ENCODE measurements at regions of chr9 and their contacts with region 1.

Region 1: DNA sequence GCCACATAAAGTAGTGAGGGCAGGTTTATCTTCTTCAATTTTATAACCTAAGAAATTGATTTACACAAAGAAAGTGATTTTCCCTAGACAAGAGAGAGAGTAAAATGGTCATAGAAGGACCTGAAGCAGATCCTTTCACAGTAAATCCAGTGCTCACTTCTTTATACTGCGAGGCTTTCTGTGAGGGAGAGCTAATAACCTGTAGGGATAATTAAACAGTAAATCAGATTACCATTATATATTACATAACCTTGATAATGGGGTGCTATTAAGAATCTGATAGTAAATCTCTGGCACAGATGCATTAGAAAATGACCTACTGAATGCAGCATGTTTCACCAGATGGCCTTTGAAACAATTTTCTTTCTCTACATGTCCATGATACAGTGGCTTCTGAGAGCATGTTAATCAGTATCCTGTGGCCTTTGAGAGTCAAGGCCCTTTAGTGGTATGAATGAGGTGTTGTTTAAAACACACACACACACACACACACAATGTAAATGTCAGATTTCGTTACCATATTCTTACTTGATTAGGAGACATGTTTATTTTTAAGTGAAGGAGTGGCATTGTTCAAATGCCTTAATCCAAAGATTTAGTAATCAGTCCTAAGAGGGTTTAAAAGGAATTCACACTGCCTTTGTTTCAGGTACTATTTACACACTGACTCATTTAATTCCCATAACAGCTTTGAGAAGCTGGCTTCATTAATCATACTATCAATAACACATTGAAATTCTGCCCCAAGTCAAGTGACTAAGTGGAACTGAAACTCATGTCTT is 124.7 kb downstream of the ALDH1A1 start:
- H3K4me3 ChIP-seq: no peak overlapping the region
- H3K27ac ChIP-seq: no peak overlapping the region
- H3K4me1 ChIP-seq: peaks cover 2% of the 10 kb centered on the region
- CTCF ChIP-seq: no peak

Region 2: GRCh38 chr9:72038890-72039410 is 789.2 kb before region 1 on chr9:
- CTCF ChIA-PET with region 1: interaction called, 28 read pairs
- POLR2A ChIA-PET with region 1: no interaction called
- H3K4me3 ChIP-seq: no peak overlapping the region
- H3K27ac ChIP-seq: no peak overlapping the region
- H3K4me1 ChIP-seq: 0 out of 2 replicates have a peak, but pooled peaks cover 3% of the 10 kb centered on the region
- CTCF ChIP-seq: peak; percentile 84

Region 3: DNA sequence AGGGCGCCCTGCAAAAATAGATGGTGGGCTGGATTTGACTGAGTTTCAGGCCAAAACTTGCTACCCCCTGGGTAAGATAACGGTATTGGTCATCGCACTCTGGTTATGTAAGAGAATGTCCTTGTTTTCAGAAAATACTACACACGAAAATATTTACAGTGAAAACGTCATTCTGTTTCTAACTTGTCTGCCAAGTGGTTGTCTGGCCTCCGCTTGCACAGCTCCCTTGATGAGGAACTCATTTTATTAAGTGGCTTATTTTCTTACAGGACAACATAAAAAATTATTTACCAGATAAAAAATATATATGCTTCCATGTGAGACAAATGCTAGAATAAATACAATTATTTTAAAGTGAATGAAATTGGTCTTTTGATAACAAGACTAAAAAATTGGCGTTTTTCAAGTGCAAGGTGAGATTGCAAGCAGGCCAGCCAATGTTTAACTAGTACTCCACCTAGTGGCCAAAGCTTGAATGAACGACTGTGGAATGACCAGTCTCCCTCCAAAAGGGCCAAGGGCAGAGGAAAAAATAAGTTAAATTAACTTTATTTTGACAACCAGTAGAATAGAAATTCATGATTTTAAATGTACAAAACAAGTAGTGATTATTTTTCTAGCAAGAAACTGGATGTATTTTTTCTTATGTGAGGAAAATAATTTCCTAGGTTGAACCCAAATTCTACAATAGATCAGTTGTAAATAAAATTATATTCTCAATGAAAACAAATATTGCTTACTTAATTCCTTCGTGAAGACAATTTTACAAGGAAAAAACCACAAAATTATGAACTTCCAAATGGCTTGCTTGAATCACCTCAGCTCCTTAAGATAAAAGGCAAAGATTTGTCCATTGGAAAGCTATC is 556.3 kb before region 1 on chr9:
- CTCF ChIA-PET with region 1: interaction called, 20 read pairs
- POLR2A ChIA-PET with region 1: no interaction called
- H3K4me3 ChIP-seq: no peak overlapping the region
- H3K27ac ChIP-seq: no peak overlapping the region
- H3K4me1 ChIP-seq: no peaks in the 10 kb centered on the region
- CTCF ChIP-seq: no peak; the same call in 1 of the 2 replicates

Region 4: DNA sequence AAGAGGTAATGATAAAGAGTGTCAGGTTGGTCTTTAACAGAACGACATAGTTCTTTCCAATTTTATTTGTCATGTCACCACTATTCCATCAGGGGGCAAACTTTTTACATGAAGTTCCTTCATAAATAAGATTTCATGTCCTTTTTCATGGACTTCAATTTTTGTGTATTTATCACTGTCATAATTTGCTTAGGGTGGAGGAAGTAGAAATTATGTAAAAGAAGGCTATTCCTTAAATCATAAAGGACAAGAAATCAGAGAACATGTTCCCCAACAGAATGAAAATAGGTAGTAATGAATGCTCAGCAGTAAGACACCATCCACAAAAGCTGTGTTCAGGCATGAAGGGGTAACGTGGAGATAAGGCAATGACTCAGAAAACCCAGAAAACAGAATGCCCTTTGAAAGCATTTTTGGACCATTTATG is 535.9 kb before region 1 on chr9:
- CTCF ChIA-PET with region 1: interaction called, 23 read pairs
- POLR2A ChIA-PET with region 1: no interaction called
- H3K4me3 ChIP-seq: no peak overlapping the region
- H3K27ac ChIP-seq: no peak overlapping the region
- H3K4me1 ChIP-seq: peaks cover 2% of the 10 kb centered on the region; the same call in 1 of the 2 replicates
- CTCF ChIP-seq: no peak

Region 5: DNA sequence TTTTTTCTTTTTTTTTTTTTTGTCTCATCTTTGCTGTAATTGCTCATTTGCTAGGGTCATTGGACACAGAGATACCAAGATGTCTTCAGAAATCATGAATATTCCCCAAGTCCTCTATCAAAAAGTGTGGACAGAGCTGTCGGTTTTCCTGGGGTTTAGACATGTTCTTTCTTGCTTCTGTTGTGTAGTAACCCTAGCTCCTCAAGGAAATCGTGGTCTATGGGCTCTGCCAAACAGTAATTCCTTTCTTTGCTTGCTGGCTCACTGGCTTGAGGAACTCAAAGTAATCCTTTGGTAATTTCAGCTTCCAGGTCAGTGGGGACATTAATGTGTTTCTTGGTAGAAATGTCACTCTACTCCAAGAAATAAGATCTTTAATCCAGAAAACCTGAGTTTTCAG is 205.0 kb before region 1 on chr9:
- CTCF ChIA-PET with region 1: no interaction called
- POLR2A ChIA-PET with region 1: no interaction called
- H3K4me3 ChIP-seq: no peak overlapping the region
- H3K27ac ChIP-seq: no peak overlapping the region
- H3K4me1 ChIP-seq: no peaks in the 10 kb centered on the region
- CTCF ChIP-seq: no peak

Region 6: GRCh38 chr9:72807765-72808445 is 20.2 kb before region 1 on chr9:
- CTCF ChIA-PET with region 1: interaction called, 37 read pairs
- POLR2A ChIA-PET with region 1: no interaction called
- H3K4me3 ChIP-seq: no peak overlapping the region
- H3K27ac ChIP-seq: no peak overlapping the region
- H3K4me1 ChIP-seq: no peaks in the 10 kb centered on the region
- CTCF ChIP-seq: no peak

Region 7: GRCh38 chr9:72902268-72902667 is 74.1 kb after region 1 on chr9:
- CTCF ChIA-PET with region 1: no interaction called
- POLR2A ChIA-PET with region 1: no interaction called
- H3K4me3 ChIP-seq: no peak overlapping the region
- H3K27ac ChIP-seq: no peak overlapping the region
- H3K4me1 ChIP-seq: no peaks in the 10 kb centered on the region
- CTCF ChIP-seq: no peak

Measured in HEK293 (cell line).